ENCODE measurements at regions of chr2 and their contacts with region 1.

Region 1: DNA sequence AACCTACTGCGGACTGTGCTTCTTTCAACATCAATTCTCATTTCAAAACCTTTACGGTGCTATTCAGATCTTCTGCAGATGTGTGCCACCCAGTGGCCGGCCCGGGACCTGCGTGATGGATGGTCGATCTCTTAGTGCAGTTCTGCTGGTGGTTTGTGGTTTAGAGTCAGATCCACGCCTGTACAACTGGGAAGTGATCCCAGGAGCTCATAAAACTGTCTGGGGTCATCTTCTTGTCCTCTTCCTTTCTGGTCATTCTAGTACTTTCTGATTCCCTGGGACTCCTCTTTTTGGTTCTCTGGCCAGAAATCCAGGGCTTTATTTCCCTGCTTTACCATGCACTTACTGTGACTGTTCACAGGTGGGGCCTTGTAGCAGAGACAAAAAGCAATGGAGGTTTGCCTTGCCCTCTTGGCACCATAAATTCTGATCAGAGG is 15.8 kb upstream of the SELENOI start:
- DNase-seq: peak; percentile 68 to 88 (median 79)
- ATAC-seq: peak; percentile 99
- H3K4me3 ChIP-seq: no peak overlapping the region
- H3K4me3 Mint-ChIP-seq: no peak overlapping the region
- H3K27ac ChIP-seq: no peak overlapping the region
- H3K27ac Mint-ChIP-seq: no peak overlapping the region
- H3K4me1 ChIP-seq: peaks cover 8% of the 10 kb centered on the region
- H3K4me1 Mint-ChIP-seq: peaks cover 8% of the 10 kb centered on the region
- H3K27me3 ChIP-seq: no peaks in the 10 kb centered on the region
- H3K27me3 Mint-ChIP-seq: no peaks in the 10 kb centered on the region
- CTCF ChIP-seq: peak; percentile 91

Region 2: DNA sequence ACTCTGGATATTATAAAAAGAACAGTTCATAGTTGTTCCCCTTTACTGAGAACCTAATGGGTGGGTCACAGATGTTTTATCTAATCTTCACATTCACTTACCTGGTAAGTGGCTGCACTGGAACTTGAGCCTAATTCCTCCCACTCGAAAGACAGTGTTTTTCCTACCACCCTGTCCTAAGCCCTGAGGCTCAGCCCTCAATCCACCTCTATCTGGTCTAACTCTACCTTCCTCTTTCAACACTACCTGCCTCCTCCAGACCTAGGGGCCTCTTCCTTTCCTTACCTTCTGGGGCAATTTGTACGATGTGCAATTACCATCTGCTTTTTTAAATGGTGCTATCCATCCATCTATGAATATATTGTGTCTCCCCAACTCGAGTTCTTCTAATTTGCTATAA is 338.2 kb before region 1 on chr2:
- CTCF ChIA-PET with region 1: interaction called, 4 read pairs
- POLR2A ChIA-PET with region 1: no interaction called
- intact Hi-C with region 1: loop called (anchors 1 kb)
- DNase-seq: no peak
- ATAC-seq: no peak
- H3K4me3 ChIP-seq: no peak overlapping the region
- H3K4me3 Mint-ChIP-seq: peak overlapping the region; percentile 79
- H3K27ac ChIP-seq: no peak overlapping the region
- H3K27ac Mint-ChIP-seq: no peak overlapping the region
- H3K4me1 ChIP-seq: no peaks in the 10 kb centered on the region
- H3K4me1 Mint-ChIP-seq: peaks cover 6% of the 10 kb centered on the region
- H3K27me3 ChIP-seq: peaks cover 0 to 2% of the 10 kb centered on the region in 2 experiments
- H3K27me3 Mint-ChIP-seq: no peaks in the 10 kb centered on the region
- CTCF ChIP-seq: no peak

Region 3: DNA sequence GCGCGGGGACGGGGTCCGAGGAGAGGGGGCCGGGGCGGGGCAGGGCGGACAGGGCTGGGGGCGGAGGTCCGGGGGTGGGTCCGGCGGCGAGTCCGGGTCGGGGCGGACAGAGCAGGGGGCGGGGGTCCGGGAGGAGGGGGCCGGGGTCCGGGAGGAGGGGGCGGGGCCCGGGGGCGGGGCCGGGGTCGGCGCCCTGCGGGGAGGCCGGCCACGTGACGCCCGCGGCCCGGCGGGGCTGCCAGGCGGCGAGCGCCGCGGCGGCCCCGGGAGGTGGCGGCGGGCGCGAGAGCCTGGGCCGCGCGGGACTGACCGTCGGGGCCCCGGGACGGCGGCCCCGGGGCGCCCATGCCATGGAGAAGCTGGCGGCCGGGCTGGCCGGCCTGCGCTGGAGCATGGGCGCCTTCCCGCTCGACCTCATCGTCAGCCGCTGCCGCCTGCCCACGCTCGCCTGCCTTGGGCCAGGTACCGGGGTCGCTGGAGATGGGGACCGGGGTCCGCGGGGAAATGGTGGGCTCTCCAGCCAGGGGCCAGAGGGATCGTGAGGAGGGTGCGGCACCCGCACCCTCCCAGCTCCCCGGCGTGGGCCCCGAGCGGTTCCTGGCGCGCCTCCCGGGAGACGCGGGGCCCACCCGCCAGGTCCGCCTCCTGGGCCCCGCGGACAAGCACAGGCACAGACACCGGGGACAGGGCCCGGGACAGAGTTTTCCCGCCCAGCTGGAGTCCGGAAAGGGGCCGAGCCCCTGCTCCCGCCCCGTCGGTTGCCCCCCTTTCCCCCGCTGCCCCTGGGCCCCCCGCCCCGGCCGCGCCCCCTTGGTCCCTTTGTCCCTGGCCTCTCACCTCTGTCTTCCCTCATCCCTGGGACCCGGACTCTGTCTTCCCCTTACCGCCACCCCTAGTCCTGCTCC is 157.0 kb before region 1 on chr2 and contains the start of gene GAREM2:
- CTCF ChIA-PET with region 1: interaction called, 4 read pairs
- POLR2A ChIA-PET with region 1: no interaction called
- intact Hi-C with region 1: loop called in 1 of 2 experiments (anchors 5 kb)
- DNase-seq: no peak
- ATAC-seq: peak; percentile 39
- H3K4me3 ChIP-seq: peak within 1 kb of the TSS in 1 of 2 experiments; percentile 37
- H3K4me3 Mint-ChIP-seq: peak within 1 kb of the TSS; percentile 78
- H3K27ac ChIP-seq: no peak within 1 kb of the TSS
- H3K27ac Mint-ChIP-seq: no peak within 1 kb of the TSS
- H3K4me1 ChIP-seq: peaks cover 5% of the 10 kb centered on the region
- H3K4me1 Mint-ChIP-seq: peaks cover 11% of the 10 kb centered on the region
- H3K27me3 ChIP-seq: peaks cover 6 to 18% of the 10 kb centered on the region in 2 experiments
- H3K27me3 Mint-ChIP-seq: peaks cover 26% of the 10 kb centered on the region
- CTCF ChIP-seq: no peak
- total RNA-seq, gene GAREM2: 2.5 to 4.8 TPM

Region 4: GRCh38 chr2:26244309-26245121 is 85.6 kb before region 1 on chr2 and contains the starts of genes HADHA and HADHB:
- CTCF ChIA-PET with region 1: interaction called, 14 read pairs
- POLR2A ChIA-PET with region 1: interaction called, 5 read pairs
- intact Hi-C with region 1: loop called in 1 of 2 experiments (anchors 2 kb)
- DNase-seq: peak; percentile 72 to 91 (median 84)
- ATAC-seq: peak; percentile 82
- H3K4me3 ChIP-seq: peak within 1 kb of the TSS; percentile 99
- H3K4me3 Mint-ChIP-seq: peak within 1 kb of the TSS; percentile 99
- H3K27ac ChIP-seq: peak within 1 kb of the TSS; percentile 99
- H3K27ac Mint-ChIP-seq: peak within 1 kb of the TSS; percentile 100
- H3K4me1 ChIP-seq: peaks cover 22% of the 10 kb centered on the region
- H3K4me1 Mint-ChIP-seq: peaks cover 60% of the 10 kb centered on the region
- H3K27me3 ChIP-seq: no peaks in the 10 kb centered on the region
- H3K27me3 Mint-ChIP-seq: no peaks in the 10 kb centered on the region
- CTCF ChIP-seq: no peak
- total RNA-seq, gene HADHA: 66.8 to 69.4 TPM
- total RNA-seq, gene HADHB: 26.0 to 26.1 TPM

Measured in CD8-positive, alpha-beta T cell (primary cell).